ENCODE measurements at regions of chrX and their contacts with region 1.

Region 1: GRCh38 chrX:2595258-2595657 is 94.5 kb upstream of the DHRSX start:
- DNase-seq: no peak
- ATAC-seq: no peak
- H3K4me3 ChIP-seq: no peak overlapping the region
- H3K27ac ChIP-seq: no peak overlapping the region
- H3K4me1 ChIP-seq: peaks cover 3% of the 10 kb centered on the region
- H3K27me3 ChIP-seq: no peaks in the 10 kb centered on the region
- CTCF ChIP-seq: no peak
- POLR2A ChIP-seq: no peak

Region 2: GRCh38 chrX:1657367-1658070 is 937.7 kb before region 1 on chrX:
- intact Hi-C with region 1: loop called (anchors 10 kb)
- DNase-seq: peak in 1 of 4 donors; percentile 2
- ATAC-seq: no peak
- H3K4me3 ChIP-seq: no peak overlapping the region
- H3K27ac ChIP-seq: no peak overlapping the region
- H3K4me1 ChIP-seq: no peaks in the 10 kb centered on the region
- H3K27me3 ChIP-seq: no peaks in the 10 kb centered on the region
- CTCF ChIP-seq: no peak
- POLR2A ChIP-seq: no peak

Measured in body of pancreas (tissue), 4 donors.